Motor neuron (in vitro differentiated cells): ENCODE measurements at regions of chr22 and their contacts with region 1.

Region 1: GRCh38 chr22:42473484-42474193 is 41.4 kb upstream of the NFAM1 start:
- ATAC-seq: peak; percentile 67 to 96 (median 82)
- H3K4me3 ChIP-seq: no peak overlapping the region
- H3K27ac ChIP-seq: no peak overlapping the region
- H3K4me1 ChIP-seq: no peaks in the 10 kb centered on the region

Region 2: GRCh38 chr22:41966607-41967240 is 506.9 kb before region 1 on chr22:
- in situ Hi-C with region 1: loop called in 1 of 9 experiments (anchors 25 kb)
- ATAC-seq: peak in 6 of 8 experiments; percentile 12 to 96 (median 52)
- H3K4me3 ChIP-seq: no peak overlapping the region
- H3K27ac ChIP-seq: no peak overlapping the region
- H3K4me1 ChIP-seq: peaks cover 3 to 10% of the 10 kb centered on the region in 2 donors

Region 3: DNA sequence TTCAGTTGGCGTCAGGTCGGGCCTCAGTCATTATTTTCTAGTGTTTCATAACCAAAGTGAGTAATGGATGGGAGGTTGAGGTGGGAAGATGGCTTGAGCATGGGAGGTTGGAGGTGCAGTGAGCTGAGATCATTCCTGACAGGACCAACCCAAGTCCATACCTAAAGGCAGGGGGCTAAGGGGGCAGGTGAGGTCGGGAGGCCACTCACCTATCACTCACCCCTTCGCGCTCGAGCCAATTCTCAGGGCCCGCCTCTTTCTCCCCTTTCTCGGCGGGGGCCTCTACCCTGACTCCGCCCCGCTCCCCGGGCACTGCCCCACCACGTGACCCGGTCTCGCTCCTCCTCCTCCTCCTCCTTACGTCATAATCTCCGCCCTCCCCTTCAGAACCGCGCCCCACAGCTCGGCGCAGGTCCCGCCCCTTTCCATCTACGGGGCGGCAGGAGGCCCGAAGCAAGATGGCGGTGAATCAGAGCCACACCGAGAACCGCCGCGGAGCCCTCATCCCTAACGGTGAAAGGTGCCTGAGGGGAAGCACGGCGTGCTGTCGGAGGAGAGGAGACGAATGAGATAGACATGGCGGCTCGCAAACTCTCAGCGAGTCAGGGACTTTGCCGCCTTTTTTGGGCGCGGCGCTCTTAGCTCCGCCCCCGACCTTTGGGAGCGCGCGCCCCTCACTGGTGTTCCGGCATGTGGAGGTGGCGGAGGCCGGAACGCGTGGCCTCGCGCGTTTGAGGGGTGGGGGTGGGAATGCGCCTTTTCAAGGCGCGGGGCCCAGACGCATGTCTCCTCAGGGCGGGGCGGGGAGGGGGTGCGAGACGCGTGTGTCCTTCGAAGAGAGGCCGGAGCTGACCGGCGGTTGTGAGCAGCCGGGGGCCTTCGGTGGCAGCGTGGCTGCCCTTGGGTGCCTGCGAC is 475.0 kb before region 1 on chr22 and contains the start of gene WBP2NL:
- in situ Hi-C with region 1: loop called in 1 of 9 experiments (anchors 25 kb)
- ATAC-seq: peak in 2 of 8 experiments; percentile 95 to 97
- H3K4me3 ChIP-seq: no peak within 1 kb of the TSS
- H3K27ac ChIP-seq: no peak within 1 kb of the TSS
- H3K4me1 ChIP-seq: peaks cover 0 to 11% of the 10 kb centered on the region in 2 donors
- total RNA-seq, gene WBP2NL: 0.05 to 1.0 (median 0.42) TPM in 7 of 8 experiments, not detected in the other

Region 4: GRCh38 chr22:42369245-42370041 is 104.2 kb before region 1 on chr22:
- in situ Hi-C with region 1: no loop called
- ATAC-seq: peak; percentile 87 to 96 (median 89)
- H3K4me3 ChIP-seq: peak overlapping the region; percentile 53 to 64 (median 59)
- H3K27ac ChIP-seq: peak overlapping the region in 1 of 2 donors; percentile 52
- H3K4me1 ChIP-seq: peaks cover 47 to 56% of the 10 kb centered on the region in 2 donors